ENCODE measurements at regions of chr1 and their contacts with region 1.

Region 1: GRCh38 chr1:228212966-228213844 is 5.4 kb downstream of the OBSCN start:
- DNase-seq: peak; percentile 81 to 85
- ATAC-seq: peak; percentile 50 to 79 (median 66)
- H3K4me3 ChIP-seq: peak overlapping the region; percentile 21 to 56 (median 48)
- H3K27ac ChIP-seq: peak overlapping the region in 5 of 10 donors; percentile 14 to 70 (median 43)
- H3K4me1 ChIP-seq: peaks cover 10 to 57% (median 28%) of the 10 kb centered on the region in 9 donors
- H3K27me3 ChIP-seq: peaks cover 0 to 21% (median 13%) of the 10 kb centered on the region in 7 donors
- CTCF ChIP-seq: peak; percentile 5 to 62 (median 43)

Region 2: DNA sequence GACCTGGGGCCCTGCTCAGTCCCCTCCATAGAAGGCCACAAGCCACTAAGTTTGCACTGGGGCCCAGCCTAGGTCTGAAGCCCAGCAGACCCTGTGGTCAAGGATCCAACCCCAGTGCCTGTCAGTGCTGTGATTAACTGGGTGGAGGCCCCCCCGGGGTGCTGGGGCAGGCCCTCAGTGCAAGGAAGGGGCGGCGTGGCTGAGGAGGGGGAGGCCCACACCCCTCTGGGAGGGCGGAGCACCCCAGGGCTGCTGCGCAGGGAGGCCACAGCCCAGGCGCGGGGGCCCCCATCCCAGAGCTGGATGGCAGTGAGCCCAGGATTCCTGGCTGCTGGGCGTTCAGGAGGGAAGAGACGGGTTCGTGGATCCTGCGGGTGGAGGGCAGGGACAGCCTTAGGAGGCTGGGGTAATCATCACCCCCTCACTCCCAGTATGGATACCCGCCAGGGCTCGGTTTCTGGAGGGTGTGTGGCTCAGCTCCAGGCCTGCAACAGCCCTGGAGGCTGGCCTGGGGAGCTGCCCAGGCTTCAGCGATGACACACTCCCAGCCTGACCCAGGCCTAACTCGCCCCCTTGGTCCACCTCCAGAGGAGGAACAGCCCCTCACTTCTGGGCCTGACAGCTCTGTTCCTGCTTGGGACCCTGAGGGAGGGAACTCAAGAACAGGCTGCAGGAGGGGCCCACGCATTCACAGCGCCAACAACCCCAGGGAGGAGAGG is 62.6 kb before region 1 on chr1:
- intact Hi-C with region 1: no loop called
- DNase-seq: peak; percentile 64 to 70
- ATAC-seq: peak; percentile 60 to 71 (median 64)
- H3K4me3 ChIP-seq: peak overlapping the region in 8 of 10 donors; percentile 21 to 49 (median 44)
- H3K27ac ChIP-seq: peak overlapping the region; percentile 67 to 91 (median 85)
- H3K4me1 ChIP-seq: peaks cover 31 to 65% (median 44%) of the 10 kb centered on the region in 9 donors
- H3K27me3 ChIP-seq: no peaks in the 10 kb centered on the region
- CTCF ChIP-seq: no peak

Region 3: DNA sequence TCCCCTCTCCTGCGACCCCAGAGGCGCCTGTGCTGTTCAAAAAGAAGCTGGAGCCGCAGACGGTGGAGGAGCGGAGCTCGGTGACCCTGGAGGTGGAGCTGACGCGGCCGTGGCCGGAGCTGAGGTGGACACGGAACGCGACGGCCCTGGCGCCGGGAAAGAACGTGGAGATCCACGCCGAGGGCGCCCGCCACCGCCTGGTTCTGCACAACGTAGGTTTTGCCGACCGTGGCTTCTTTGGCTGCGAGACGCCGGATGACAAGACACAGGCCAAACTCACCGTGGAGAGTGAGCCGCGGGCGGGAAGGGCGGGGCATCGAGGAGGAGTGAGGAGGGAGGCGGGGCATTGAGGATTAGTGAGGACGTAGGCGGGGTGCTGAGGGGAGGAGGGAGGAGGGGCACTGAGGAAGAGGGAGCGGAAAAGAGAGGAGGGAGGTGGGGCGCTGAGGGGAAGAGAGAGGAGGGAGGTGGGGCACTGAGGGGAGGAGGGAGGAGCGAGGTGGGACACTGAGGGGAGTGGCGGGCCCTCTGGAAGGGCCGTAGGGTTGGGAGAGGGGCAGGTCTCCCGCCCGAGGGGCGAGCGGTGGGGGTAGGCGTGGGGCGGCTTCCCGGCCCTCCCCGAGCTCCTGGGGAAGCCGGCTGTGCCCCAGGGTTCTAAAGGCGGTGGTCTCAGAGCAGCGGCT is 62.7 kb after region 1 on chr1:
- intact Hi-C with region 1: no loop called
- DNase-seq: peak; percentile 85 to 91
- ATAC-seq: peak; percentile 7 to 90 (median 80)
- H3K4me3 ChIP-seq: peak overlapping the region; percentile 28 to 78 (median 66)
- H3K27ac ChIP-seq: peak overlapping the region; percentile 32 to 79 (median 58)
- H3K4me1 ChIP-seq: peaks cover 0 to 38% (median 13%) of the 10 kb centered on the region in 9 donors
- H3K27me3 ChIP-seq: no peaks in the 10 kb centered on the region
- CTCF ChIP-seq: no peak

Region 4: DNA sequence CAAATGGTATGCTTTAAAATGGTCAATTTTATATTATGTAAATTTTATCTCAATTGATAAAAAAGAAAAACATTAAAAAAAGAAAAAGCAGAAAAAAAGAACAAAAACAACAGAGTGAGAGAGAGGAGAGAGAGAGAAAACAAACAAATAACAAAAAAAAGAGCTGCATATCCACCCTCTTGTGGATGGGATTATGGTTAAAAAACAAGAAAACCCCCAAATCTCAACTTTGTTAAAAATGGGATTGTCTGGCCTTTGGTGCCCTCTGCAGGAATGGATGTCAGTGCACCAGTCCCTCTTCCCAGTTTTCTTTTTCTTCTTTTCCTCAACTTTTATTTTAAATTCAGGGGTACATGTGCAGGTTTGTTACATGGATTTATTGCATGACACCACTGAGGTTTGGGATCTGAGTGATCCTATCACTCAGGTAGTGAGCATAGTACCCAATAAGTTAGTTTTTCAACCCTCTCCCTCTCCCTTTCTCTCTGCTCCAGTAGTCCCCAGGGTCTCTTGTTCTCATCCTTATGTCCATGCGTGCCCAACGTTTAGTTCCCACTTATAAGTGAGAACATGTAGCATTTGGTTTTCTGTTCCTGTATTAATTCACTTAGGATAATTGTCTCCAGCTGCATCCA is 302.1 kb after region 1 on chr1:
- intact Hi-C with region 1: loop called in 1 of 10 experiments (anchors 5 kb)
- DNase-seq: no peak
- ATAC-seq: peak in 1 of 8 donors; percentile 52
- H3K4me3 ChIP-seq: no peak overlapping the region
- H3K27ac ChIP-seq: no peak overlapping the region
- H3K4me1 ChIP-seq: no peaks in the 10 kb centered on the region
- H3K27me3 ChIP-seq: peaks cover 0 to 32% (median 0%) of the 10 kb centered on the region in 7 donors
- CTCF ChIP-seq: peak; percentile 27 to 77 (median 69)